ENCODE measurements at regions of chr6 and their contacts with region 1.

Region 1: DNA sequence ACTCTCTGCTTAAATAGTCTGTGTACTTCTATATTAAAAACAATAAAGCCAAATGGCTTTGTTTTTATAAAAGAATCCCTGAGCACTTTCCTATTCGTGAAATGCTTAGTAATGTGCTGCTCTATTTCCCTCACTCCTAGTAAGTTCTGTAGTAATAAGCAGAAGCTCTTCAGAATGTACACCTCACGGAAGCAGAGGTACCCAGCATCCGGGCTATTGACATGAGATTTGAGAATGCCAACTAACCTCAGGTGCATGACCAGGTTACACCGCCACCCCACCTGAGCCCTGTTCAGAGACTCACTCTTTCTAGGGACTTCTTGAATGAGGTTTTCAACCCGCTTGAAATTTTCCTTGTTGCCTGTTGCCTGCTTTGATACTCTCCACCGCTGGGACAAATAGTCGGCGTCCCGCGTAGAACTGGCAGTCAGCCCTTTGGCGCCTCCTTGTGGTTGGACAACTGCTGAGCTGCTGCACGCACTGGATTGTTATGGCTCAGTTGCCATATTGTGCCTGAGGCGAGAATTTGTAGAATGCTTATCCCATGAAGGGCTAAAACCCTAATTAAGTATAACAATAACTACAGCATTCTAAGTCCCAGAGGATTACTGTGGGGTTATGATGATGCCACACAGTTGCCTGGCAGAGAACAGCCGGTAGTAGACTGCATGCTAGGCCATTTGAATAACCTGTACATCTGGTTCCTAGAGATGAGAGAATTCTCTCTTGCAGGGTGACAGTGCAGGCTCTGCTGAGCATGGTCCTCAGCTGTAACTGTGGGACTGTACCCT is 95.4 kb downstream of the KHDC1L start:
- DNase-seq: peak; percentile 72
- ATAC-seq: peak; percentile 90
- H3K4me3 Mint-ChIP-seq: peak overlapping the region; percentile 33
- H3K27ac Mint-ChIP-seq: no peak overlapping the region
- H3K4me1 Mint-ChIP-seq: peaks cover 4% of the 10 kb centered on the region
- H3K27me3 Mint-ChIP-seq: no peaks in the 10 kb centered on the region
- CTCF ChIP-seq: peak; percentile 8

Region 2: GRCh38 chr6:72250664-72251063 is 879.2 kb before region 1 on chr6:
- CTCF ChIA-PET with region 1: no interaction called
- POLR2A ChIA-PET with region 1: no interaction called
- intact Hi-C with region 1: loop called (anchors 5 kb)
- DNase-seq: no peak
- ATAC-seq: no peak
- H3K4me3 Mint-ChIP-seq: no peak overlapping the region
- H3K27ac Mint-ChIP-seq: no peak overlapping the region
- H3K4me1 Mint-ChIP-seq: no peaks in the 10 kb centered on the region
- H3K27me3 Mint-ChIP-seq: no peaks in the 10 kb centered on the region
- CTCF ChIP-seq: no peak

Region 3: DNA sequence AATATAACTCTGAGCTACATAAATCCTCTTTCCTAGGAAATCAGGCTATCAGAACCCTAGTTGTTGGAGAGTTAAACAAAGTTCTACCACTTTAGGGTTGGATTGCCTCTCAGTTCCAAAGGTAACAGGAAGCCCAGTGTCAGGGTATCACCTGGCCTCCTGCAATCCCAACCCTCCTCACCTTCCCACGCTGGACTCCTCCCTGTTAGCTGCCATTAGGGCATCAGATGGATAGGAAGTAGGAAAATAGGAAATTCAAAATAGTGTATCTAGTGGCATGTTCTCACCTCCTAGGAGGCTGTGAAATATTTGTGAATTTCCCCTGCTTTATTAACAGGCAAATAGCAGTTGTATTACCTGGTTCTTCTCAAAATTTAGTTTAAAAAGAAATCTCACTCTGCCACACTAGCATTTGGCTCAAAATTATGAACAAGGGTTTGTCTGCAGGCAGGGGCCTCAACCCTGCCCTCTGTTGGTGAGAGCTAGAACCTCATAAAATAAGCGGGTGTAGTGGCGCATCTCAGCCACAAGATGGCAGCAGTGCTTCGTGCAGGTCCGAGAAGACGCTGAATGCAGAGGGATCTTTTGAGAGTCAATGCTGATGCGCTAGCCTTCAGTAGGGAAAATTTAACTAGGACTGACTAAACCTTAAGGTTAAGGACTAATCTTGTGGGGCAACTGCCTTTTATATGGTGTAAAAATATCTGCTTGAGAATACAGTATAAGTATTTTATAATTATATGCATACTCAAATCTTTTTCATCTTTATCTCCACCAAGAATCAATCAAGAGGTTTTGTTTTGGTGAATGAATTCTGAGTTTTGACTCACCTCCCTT is 717.8 kb before region 1 on chr6:
- CTCF ChIA-PET with region 1: interaction called, 115 read pairs
- POLR2A ChIA-PET with region 1: no interaction called
- intact Hi-C with region 1: loop called (anchors 1 kb)
- DNase-seq: peak; percentile 67
- ATAC-seq: peak; percentile 99
- H3K4me3 Mint-ChIP-seq: no peak overlapping the region
- H3K27ac Mint-ChIP-seq: no peak overlapping the region
- H3K4me1 Mint-ChIP-seq: peaks cover 5% of the 10 kb centered on the region
- H3K27me3 Mint-ChIP-seq: peaks cover 20% of the 10 kb centered on the region
- CTCF ChIP-seq: peak; percentile 100

Region 4: GRCh38 chr6:72522719-72523141 is 607.1 kb before region 1 on chr6:
- CTCF ChIA-PET with region 1: interaction called, 7 read pairs
- POLR2A ChIA-PET with region 1: no interaction called
- intact Hi-C with region 1: loop called (anchors 1 kb)
- DNase-seq: no peak
- ATAC-seq: no peak
- H3K4me3 Mint-ChIP-seq: no peak overlapping the region
- H3K27ac Mint-ChIP-seq: no peak overlapping the region
- H3K4me1 Mint-ChIP-seq: no peaks in the 10 kb centered on the region
- H3K27me3 Mint-ChIP-seq: peaks cover 20% of the 10 kb centered on the region
- CTCF ChIP-seq: no peak

Region 5: GRCh38 chr6:74015427-74015826 is 885.6 kb after region 1 on chr6:
- CTCF ChIA-PET with region 1: no interaction called
- POLR2A ChIA-PET with region 1: no interaction called
- intact Hi-C with region 1: no loop called
- DNase-seq: no peak
- ATAC-seq: no peak
- H3K4me3 Mint-ChIP-seq: no peak overlapping the region
- H3K27ac Mint-ChIP-seq: no peak overlapping the region
- H3K4me1 Mint-ChIP-seq: no peaks in the 10 kb centered on the region
- H3K27me3 Mint-ChIP-seq: no peaks in the 10 kb centered on the region
- CTCF ChIP-seq: no peak

Measured in activated B cell treated with CpG ODN at 0.5 μM for 24 hours (primary cell).